ENCODE measurements at regions of chr5 and their contacts with region 1.

Region 1: DNA sequence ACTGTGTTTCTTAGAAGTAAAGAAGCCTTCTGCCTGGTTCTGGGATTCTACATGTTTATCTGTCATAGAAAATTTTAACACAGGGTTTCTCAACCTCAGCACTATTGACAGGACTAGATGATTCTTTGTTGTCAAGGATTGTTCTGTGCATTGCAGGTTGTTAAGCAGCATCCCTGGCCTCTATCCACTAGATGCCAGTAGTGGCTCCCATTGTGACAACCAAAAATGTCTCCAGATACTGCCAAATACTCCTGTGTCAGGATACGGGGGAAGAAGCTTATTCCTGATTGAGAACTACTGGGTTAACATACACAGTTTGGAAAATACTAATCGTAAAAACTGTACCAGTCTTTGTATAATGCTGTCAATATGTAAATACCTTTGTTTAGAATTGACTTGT is 167.1 kb downstream of the NIPBL start:
- DNase-seq: peak in 1 of 2 experiments; percentile 48
- H3K4me3 ChIP-seq: no peak overlapping the region
- H3K4me3 Mint-ChIP-seq: no peak overlapping the region
- H3K27ac Mint-ChIP-seq: no peak overlapping the region
- H3K4me1 ChIP-seq: no peaks in the 10 kb centered on the region
- H3K4me1 Mint-ChIP-seq: no peaks in the 10 kb centered on the region
- H3K27me3 ChIP-seq: no peaks in the 10 kb centered on the region
- H3K27me3 Mint-ChIP-seq: no peaks in the 10 kb centered on the region
- CTCF ChIP-seq: peak in 1 of 2 experiments; percentile 59

Region 2: GRCh38 chr5:37121027-37121426 is 77.3 kb after region 1 on chr5:
- CTCF ChIA-PET with region 1: no interaction called
- POLR2A ChIA-PET with region 1: no interaction called
- intact Hi-C with region 1: loop called (anchors 1 kb)
- DNase-seq: no peak
- H3K4me3 ChIP-seq: no peak overlapping the region
- H3K4me3 Mint-ChIP-seq: no peak overlapping the region
- H3K27ac Mint-ChIP-seq: no peak overlapping the region
- H3K4me1 ChIP-seq: no peaks in the 10 kb centered on the region
- H3K4me1 Mint-ChIP-seq: peaks cover 9% of the 10 kb centered on the region
- H3K27me3 ChIP-seq: no peaks in the 10 kb centered on the region
- H3K27me3 Mint-ChIP-seq: no peaks in the 10 kb centered on the region
- CTCF ChIP-seq: no peak

Region 3: GRCh38 chr5:37136694-37137093 is 93.0 kb after region 1 on chr5:
- CTCF ChIA-PET with region 1: no interaction called
- POLR2A ChIA-PET with region 1: no interaction called
- intact Hi-C with region 1: loop called (anchors 1 kb)
- DNase-seq: no peak
- H3K4me3 ChIP-seq: no peak overlapping the region
- H3K4me3 Mint-ChIP-seq: no peak overlapping the region
- H3K27ac Mint-ChIP-seq: no peak overlapping the region
- H3K4me1 ChIP-seq: no peaks in the 10 kb centered on the region
- H3K4me1 Mint-ChIP-seq: no peaks in the 10 kb centered on the region
- H3K27me3 ChIP-seq: no peaks in the 10 kb centered on the region
- H3K27me3 Mint-ChIP-seq: no peaks in the 10 kb centered on the region
- CTCF ChIP-seq: no peak

Region 4: DNA sequence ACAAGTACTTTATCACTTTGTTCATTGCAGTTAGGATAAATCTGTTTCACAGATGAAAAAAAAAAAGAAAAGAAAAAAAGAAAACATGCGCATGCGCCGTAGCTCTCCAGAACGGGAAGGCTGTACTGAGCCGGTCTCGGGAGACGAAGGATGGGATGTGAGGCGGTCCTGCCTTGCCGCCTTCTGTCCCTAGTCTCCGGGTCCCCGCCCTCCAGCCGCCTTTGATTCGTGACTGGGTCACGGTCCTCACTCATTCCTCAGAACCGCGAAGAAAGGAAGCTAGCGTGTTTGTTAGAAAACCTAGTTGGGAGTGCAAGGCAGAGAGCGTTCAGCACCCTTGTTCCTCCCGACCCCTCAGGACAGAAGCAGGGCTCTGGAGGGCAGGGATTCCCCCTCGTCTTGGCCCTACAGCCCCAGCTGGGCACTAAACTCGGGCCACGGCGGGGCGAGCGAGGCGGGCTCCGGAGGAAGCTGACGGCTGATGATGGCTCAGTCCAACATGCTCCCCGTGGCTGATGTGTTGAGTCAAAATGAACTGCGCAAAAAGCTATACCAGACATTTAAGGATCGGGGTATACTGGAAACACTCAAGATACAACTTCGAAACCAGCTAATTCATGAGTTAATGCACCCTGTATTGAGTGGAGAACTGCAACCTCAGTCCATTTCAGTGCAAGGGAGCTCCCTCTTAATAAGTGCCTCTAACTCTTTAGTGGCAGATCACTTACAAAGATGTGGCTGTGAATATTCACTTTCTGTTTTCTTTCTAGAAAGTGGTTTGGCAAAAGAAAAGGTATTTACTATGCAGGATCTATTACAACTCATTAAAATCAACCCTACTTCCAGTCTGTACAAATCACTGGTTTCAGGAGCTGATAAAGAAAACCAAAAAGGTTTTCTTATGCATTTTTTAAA is 165.5 kb after region 1 on chr5:
- CTCF ChIA-PET with region 1: no interaction called
- POLR2A ChIA-PET with region 1: interaction called, 3 read pairs
- intact Hi-C with region 1: loop called (anchors 10 kb)
- DNase-seq: no peak
- H3K4me3 ChIP-seq: no peak overlapping the region
- H3K4me3 Mint-ChIP-seq: no peak overlapping the region
- H3K27ac Mint-ChIP-seq: no peak overlapping the region
- H3K4me1 ChIP-seq: no peaks in the 10 kb centered on the region
- H3K4me1 Mint-ChIP-seq: peaks cover 6% of the 10 kb centered on the region
- H3K27me3 ChIP-seq: no peaks in the 10 kb centered on the region
- H3K27me3 Mint-ChIP-seq: no peaks in the 10 kb centered on the region
- CTCF ChIP-seq: no peak

Measured in Caco-2 (cell line).